ENCODE measurements at regions of chr1 and their contacts with region 1.

Region 1: GRCh38 chr1:162391790-162392563 is 10.4 kb downstream of the C1orf226 start:
- DNase-seq: no peak
- H3K4me3 ChIP-seq: no peak overlapping the region
- H3K27me3 ChIP-seq: peaks cover 8% of the 10 kb centered on the region
- CTCF ChIP-seq: peak; percentile 81

Region 2: DNA sequence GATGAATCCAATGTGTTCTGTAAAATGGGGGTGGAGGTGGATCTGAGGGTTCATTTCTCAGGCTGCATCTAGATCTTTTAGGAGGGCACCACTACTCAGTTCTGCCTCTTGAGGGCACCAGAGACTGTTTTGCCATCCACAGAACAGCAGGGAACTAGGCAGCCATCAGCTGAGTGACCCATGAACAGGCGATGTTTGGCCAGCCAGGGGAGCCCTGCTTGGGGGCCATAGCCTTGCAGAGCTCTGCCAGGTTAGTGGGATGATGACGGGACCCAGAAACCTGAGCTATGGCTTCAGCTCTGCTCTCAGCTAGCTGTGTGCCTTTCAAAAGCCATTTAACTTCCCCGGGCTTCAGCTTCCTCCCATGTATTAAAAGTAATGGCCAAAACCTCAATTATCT is 335.9 kb before region 1 on chr1:
- CTCF ChIA-PET with region 1: interaction called, 19 read pairs
- POLR2A ChIA-PET with region 1: no interaction called
- DNase-seq: no peak
- H3K4me3 ChIP-seq: no peak overlapping the region
- H3K27me3 ChIP-seq: peaks cover 3% of the 10 kb centered on the region; the same call in 1 of the 2 replicates
- CTCF ChIP-seq: peak; percentile 95

Region 3: DNA sequence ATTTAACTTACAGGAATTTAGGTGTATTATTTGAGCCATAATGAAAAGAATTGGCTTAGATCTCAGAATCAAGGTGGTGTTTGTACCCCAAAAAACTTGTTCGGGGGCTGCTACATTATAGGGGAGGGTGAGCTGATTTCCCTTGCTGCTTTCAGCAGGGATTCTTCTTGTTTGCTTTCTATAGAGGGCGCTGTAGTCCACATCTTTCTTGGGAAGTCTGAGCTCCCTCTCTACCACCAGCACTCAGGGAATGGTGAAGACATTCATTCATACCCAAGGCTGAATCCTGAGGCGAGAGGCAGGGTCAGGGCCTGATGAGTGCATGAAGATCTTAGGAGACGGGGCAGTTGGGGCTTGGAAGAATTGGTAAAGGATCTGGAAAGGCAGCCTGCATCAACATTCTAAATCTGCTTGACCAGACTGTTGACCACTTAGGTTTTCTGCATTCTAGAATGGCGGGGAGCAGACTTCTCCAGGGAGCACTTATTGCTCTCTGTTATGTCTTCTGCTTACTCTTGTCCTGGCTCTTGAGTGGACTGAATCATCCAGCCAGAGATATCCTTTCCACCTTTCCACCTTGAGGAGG is 34.2 kb before region 1 on chr1:
- CTCF ChIA-PET with region 1: interaction called, 13 read pairs
- POLR2A ChIA-PET with region 1: no interaction called
- DNase-seq: no peak
- H3K4me3 ChIP-seq: no peak overlapping the region
- H3K27me3 ChIP-seq: no peaks in the 10 kb centered on the region; the same call in 1 of the 2 replicates
- CTCF ChIP-seq: peak; percentile 54

Region 4: GRCh38 chr1:162381383-162381782 is 10.6 kb before region 1 on chr1 and contains the start of gene C1orf226:
- CTCF ChIA-PET with region 1: interaction called, 24 read pairs
- POLR2A ChIA-PET with region 1: no interaction called
- DNase-seq: no peak
- H3K4me3 ChIP-seq: no peak within 1 kb of the TSS
- H3K27me3 ChIP-seq: no peaks in the 10 kb centered on the region
- CTCF ChIP-seq: no peak
- polyA plus RNA-seq, gene C1orf226: 1.0 and 1.3 TPM in 2 replicates

Measured in BJ (cell line).